PC-3 (cell line): ENCODE measurements at regions of chr7 and their contacts with region 1.

Region 1: GRCh38 chr7:27739909-27740448 is at the start of gene TAX1BP1:
- DNase-seq: peak; percentile 93
- ATAC-seq: peak; percentile 77
- H3K4me3 ChIP-seq: peak within 1 kb of the TSS; percentile 89
- H3K27ac ChIP-seq: peak within 1 kb of the TSS; percentile 71
- H3K4me1 ChIP-seq: peaks cover 40% of the 10 kb centered on the region
- H3K27me3 ChIP-seq: no peaks in the 10 kb centered on the region
- CTCF ChIP-seq: no peak
- total RNA-seq, gene TAX1BP1: 49.5 and 58.5 TPM in 2 replicates

Region 2: DNA sequence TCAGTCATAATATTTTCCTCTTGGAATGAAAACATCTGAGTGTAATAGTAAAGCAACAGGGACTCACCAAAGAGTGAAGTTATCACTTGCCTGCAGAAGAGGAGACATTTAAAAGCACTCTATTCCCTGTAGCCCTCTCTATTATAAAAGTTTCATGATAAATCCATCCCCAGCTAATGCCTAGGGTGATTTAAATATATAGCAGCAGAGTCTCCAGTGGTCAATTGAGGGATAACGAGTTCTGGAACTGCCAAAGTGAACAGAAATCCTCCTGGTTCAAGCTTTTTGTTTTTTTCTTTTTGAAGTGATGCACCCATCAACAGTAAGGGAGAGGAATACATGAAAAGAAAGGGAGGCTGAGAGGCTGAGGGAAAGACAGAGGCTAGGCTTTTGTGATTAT is 410.1 kb before region 1 on chr7:
- CTCF ChIA-PET with region 1: no interaction called
- POLR2A ChIA-PET with region 1: no interaction called
- intact Hi-C with region 1: no loop called
- DNase-seq: peak; percentile 30
- ATAC-seq: peak; percentile 46; the same call in 1 of the 2 replicates
- H3K4me3 ChIP-seq: no peak overlapping the region
- H3K27ac ChIP-seq: no peak overlapping the region
- H3K4me1 ChIP-seq: no peaks in the 10 kb centered on the region
- H3K27me3 ChIP-seq: no peaks in the 10 kb centered on the region
- CTCF ChIP-seq: peak; percentile 50

Region 3: DNA sequence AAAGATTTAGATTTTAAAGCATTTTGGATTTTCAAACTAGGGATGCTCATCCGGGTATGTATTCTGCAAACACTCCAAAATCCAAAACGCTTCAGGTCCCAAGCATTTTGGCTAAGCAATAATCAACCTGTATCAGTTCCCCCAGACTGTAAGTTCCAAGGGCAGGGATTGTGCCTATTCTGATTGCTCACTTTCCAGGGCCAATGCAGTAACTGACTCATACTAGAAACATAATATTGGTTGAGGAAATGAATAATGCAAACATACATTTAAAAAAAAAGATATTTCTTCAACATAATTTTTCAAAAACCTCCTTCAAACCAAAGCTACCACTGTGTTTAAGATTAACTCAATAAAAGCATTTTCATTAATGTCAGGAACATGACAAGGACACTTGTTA is 146.8 kb before region 1 on chr7:
- CTCF ChIA-PET with region 1: no interaction called
- POLR2A ChIA-PET with region 1: no interaction called
- intact Hi-C with region 1: no loop called
- DNase-seq: peak; percentile 54
- ATAC-seq: peak; percentile 96
- H3K4me3 ChIP-seq: no peak overlapping the region
- H3K27ac ChIP-seq: no peak overlapping the region
- H3K4me1 ChIP-seq: peaks cover 10% of the 10 kb centered on the region
- H3K27me3 ChIP-seq: no peaks in the 10 kb centered on the region
- CTCF ChIP-seq: no peak

Region 4: GRCh38 chr7:27640914-27641580 is 98.9 kb before region 1 on chr7:
- CTCF ChIA-PET with region 1: interaction called, 4 read pairs
- POLR2A ChIA-PET with region 1: no interaction called
- intact Hi-C with region 1: loop called (anchors 2 kb)
- DNase-seq: peak; percentile 93
- ATAC-seq: peak; percentile 96
- H3K4me3 ChIP-seq: peak overlapping the region; percentile 50
- H3K27ac ChIP-seq: peak overlapping the region; percentile 84
- H3K4me1 ChIP-seq: peaks cover 33% of the 10 kb centered on the region
- H3K27me3 ChIP-seq: no peaks in the 10 kb centered on the region
- CTCF ChIP-seq: peak; percentile 38; the same call in 1 of the 2 replicates

Region 5: GRCh38 chr7:27689591-27690164 is 50.3 kb before region 1 on chr7:
- CTCF ChIA-PET with region 1: no interaction called
- POLR2A ChIA-PET with region 1: no interaction called
- intact Hi-C with region 1: loop called (anchors 5 kb)
- DNase-seq: peak; percentile 67
- ATAC-seq: peak; percentile 93
- H3K4me3 ChIP-seq: no peak overlapping the region
- H3K27ac ChIP-seq: no peak overlapping the region
- H3K4me1 ChIP-seq: peaks cover 18% of the 10 kb centered on the region
- H3K27me3 ChIP-seq: no peaks in the 10 kb centered on the region
- CTCF ChIP-seq: peak; percentile 89

Region 6: DNA sequence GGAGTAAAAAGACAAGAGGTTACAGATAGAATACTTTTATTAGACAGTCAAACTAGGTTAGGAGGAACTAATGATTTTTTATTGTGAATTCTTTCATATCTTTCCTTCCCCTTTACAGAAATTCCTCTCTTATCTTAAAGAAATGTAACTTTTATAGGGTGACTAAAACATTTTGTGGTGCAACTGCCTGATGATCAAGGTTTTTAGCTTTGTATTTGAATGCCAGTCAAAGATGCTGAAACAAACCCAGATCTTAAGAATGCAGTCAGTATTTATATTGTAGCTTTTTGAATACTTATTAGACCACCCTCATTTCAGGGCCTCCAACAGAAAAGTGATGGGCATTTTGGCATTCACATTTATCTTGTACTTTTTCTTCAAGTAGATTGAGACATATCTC is 27.4 kb after region 1 on chr7:
- CTCF ChIA-PET with region 1: no interaction called
- POLR2A ChIA-PET with region 1: interaction called, 11 read pairs
- intact Hi-C with region 1: no loop called
- DNase-seq: peak; percentile 77
- ATAC-seq: peak; percentile 63
- H3K4me3 ChIP-seq: no peak overlapping the region
- H3K27ac ChIP-seq: peak overlapping the region; percentile 9; the same call in 1 of the 2 replicates
- H3K4me1 ChIP-seq: peaks cover 78% of the 10 kb centered on the region
- H3K27me3 ChIP-seq: no peaks in the 10 kb centered on the region
- CTCF ChIP-seq: no peak